Gastrocnemius medialis (tissue), 4 donors: ENCODE measurements at regions of chr18 and their contacts with region 1.

Region 1: GRCh38 chr18:58529714-58530354 is 99.1 kb downstream of the ALPK2 start:
- DNase-seq: peak in 1 of 2 donors; percentile 38
- ATAC-seq: peak; percentile 23 to 53
- H3K4me3 ChIP-seq: no peak overlapping the region
- H3K27ac ChIP-seq: no peak overlapping the region
- H3K4me1 ChIP-seq: no peaks in the 10 kb centered on the region
- H3K27me3 ChIP-seq: no peaks in the 10 kb centered on the region
- CTCF ChIP-seq: peak; percentile 77 to 88 (median 83)
- POLR2A ChIP-seq: no peak

Region 2: DNA sequence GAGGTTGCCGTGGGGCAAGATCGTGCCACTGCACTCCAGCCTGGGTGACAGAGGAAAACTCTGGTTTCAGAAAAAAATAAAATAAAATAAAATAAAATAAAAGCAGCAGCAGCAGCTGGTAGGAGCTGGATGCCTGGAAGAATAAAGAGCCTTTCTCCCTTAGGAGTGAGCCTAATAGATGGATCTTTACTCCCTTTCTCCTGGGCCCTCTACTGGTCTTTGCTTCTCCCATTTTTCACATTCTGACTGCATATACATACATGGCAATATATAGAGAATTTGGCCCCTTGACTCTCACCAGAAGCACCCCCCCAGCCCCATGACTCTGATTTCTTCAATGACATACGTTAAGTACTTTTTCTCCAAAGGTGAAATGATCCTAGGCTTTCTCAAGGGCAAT is 131.6 kb after region 1 on chr18:
- in situ Hi-C with region 1: loop called in 3 of 4 experiments (anchors 5 to 25 kb)
- intact Hi-C with region 1: loop called (anchors 1 kb)
- DNase-seq: no peak
- ATAC-seq: peak; percentile 70 to 73
- H3K4me3 ChIP-seq: no peak overlapping the region
- H3K27ac ChIP-seq: no peak overlapping the region
- H3K4me1 ChIP-seq: peaks cover 0 to 3% of the 10 kb centered on the region in 2 donors
- H3K27me3 ChIP-seq: no peaks in the 10 kb centered on the region
- CTCF ChIP-seq: peak in 3 of 5 experiments; percentile 41 to 46 (median 45)
- POLR2A ChIP-seq: no peak

Region 3: DNA sequence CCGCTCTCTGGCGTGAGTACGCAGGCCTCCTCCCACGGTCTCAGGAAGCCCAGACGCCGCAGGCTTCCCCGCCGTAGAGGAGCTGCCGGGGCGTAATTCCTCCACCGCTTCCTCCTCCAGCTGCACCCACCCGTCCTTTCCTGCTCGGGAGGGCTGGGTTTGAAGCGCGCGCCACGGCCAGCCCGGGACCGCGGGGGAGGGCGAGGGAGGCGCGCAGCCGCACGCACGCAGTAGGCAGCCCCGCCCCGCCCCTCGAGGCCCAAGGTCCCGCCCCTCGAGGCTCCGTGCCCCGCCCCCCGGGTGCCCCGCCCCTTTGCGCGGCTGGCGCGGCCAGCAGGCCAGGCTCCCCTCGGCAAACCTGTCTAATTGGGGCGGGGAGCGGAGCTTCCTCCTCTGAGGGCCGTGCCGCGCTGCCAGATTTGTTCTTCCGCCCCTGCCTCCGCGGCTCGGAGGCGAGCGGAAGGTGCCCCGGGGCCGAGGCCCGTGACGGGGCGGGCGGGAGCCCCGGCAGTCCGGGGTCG is 141.3 kb after region 1 on chr18 and contains the start of gene MALT1:
- in situ Hi-C with region 1: loop called in 2 of 4 experiments (anchors 25 kb)
- intact Hi-C with region 1: no loop called
- DNase-seq: peak; percentile 88 to 89
- ATAC-seq: peak; percentile 92 to 95
- H3K4me3 ChIP-seq: peak within 1 kb of the TSS; percentile 58 to 68 (median 66)
- H3K27ac ChIP-seq: peak within 1 kb of the TSS; percentile 86 to 96 (median 94)
- H3K4me1 ChIP-seq: peaks cover 15 to 22% of the 10 kb centered on the region in 2 donors
- H3K27me3 ChIP-seq: no peaks in the 10 kb centered on the region
- CTCF ChIP-seq: no peak
- POLR2A ChIP-seq: peak; percentile 90 to 95
- total RNA-seq, gene MALT1: 9.9 to 24.8 (median 12.9) TPM

Region 4: GRCh38 chr18:58761241-58761969 is 231.6 kb after region 1 on chr18:
- in situ Hi-C with region 1: loop called (anchors 5 kb)
- intact Hi-C with region 1: loop called (anchors 1 kb)
- DNase-seq: peak; percentile 61 to 63
- ATAC-seq: peak; percentile 82 to 89
- H3K4me3 ChIP-seq: no peak overlapping the region
- H3K27ac ChIP-seq: peak overlapping the region; percentile 63 to 83 (median 70)
- H3K4me1 ChIP-seq: peaks cover 14 to 19% of the 10 kb centered on the region in 2 donors
- H3K27me3 ChIP-seq: no peaks in the 10 kb centered on the region
- CTCF ChIP-seq: no peak
- POLR2A ChIP-seq: no peak

Region 5: DNA sequence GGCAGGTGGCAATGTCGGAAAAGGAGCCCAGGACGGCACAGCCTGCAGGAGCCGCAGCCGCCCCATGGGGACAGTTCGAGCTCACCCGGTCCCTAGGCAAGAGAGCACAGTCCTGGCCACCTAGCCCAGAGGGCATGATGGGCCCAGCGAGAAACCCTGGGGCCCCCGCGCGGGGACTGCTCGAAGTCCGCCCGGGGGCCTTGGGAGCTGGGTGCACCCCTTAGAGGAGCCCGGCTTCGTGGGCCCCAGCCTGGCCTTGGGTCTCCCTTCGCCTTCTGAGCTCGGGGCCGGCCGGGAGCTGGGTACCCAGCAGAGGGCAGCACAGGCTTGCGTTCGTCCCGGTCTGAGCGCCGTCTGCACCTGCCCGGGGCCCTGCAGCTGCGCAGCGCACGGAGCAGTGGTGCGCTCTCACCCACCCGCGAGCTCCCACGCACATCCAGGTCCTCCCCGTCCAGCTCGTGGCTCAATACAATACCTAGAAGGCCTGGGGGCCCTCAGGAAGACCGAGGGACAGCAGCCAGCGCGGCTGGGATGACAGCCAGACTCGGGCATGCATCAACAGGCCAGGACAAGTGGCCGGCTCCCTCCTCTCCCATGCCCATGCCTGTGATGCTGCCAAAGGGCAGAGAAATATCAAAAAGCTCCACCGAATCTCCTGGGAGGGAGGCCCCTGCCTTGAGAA is 238.6 kb after region 1 on chr18:
- in situ Hi-C with region 1: loop called (anchors 5 kb)
- intact Hi-C with region 1: loop called (anchors 1 kb)
- DNase-seq: peak; percentile 53 to 69
- ATAC-seq: peak; percentile 82 to 87
- H3K4me3 ChIP-seq: peak overlapping the region; percentile 44 to 67 (median 52)
- H3K27ac ChIP-seq: peak overlapping the region in 3 of 4 donors; percentile 25 to 33 (median 28)
- H3K4me1 ChIP-seq: peaks cover 3 to 13% of the 10 kb centered on the region in 2 donors
- H3K27me3 ChIP-seq: no peaks in the 10 kb centered on the region
- CTCF ChIP-seq: peak; percentile 69 to 93 (median 90)
- POLR2A ChIP-seq: no peak